Psoas muscle (tissue), 8 donors: ENCODE measurements at regions of chr5 and their contacts with region 1.

Region 1: DNA sequence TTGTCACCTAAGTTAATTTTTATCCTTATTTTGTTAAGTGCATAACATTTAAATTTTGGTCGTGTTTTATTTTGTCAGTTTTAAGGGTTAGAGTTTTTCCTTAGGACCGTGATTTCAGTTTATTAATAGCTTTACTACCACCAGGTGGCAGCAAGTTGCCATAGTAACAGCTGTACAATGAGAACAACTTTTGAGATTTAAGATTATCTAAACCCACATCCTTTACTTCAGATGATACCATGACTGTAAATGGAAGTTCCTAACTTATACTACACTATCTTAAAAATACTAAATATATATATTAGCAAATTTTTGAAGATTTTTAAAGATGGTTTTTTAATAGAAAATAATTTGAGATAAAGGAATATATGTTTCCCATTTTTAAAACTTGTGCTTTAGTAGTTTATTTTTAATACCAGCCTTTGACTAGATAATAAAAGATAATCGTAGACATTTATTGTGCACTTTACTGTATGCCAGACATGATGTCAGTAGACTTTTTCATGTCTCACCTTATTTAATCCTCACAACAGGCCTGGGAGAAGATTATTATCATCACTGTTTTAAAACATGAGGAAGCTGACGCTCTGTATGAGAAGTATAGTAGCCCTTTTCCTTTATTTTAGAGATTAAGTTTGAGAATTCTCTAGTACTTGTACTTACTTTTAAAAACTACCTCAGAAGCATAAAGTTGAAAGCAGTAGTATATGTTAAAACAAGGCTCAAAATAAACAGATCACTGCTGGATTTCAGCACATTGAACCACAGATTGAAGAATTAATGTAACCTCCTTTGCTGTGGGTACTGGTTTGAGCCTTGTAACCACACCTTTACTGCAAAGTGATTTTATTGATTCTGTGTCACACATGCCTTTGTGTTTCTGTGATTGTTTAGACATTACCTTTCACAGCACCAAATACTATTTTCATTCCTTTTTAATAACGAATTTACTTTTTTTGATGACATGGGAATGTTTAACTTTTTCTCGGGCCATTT is 27.5 kb downstream of the SREK1 start:
- DNase-seq: no peak
- ATAC-seq: peak in 2 of 4 donors; percentile 27 to 72
- H3K4me3 ChIP-seq: no peak overlapping the region
- H3K27ac ChIP-seq: no peak overlapping the region
- H3K4me1 ChIP-seq: no peaks in the 10 kb centered on the region
- H3K27me3 ChIP-seq: no peaks in the 10 kb centered on the region
- CTCF ChIP-seq: peak; percentile 49

Region 2: GRCh38 chr5:65588694-65589093 is 583.0 kb before region 1 on chr5:
- intact Hi-C with region 1: loop called in 1 of 2 experiments (anchors 10 kb)
- DNase-seq: no peak
- ATAC-seq: no peak
- H3K4me3 ChIP-seq: no peak overlapping the region
- H3K27ac ChIP-seq: no peak overlapping the region
- H3K4me1 ChIP-seq: no peaks in the 10 kb centered on the region
- H3K27me3 ChIP-seq: no peaks in the 10 kb centered on the region
- CTCF ChIP-seq: no peak

Region 3: GRCh38 chr5:66089384-66089783 is 82.3 kb before region 1 on chr5:
- intact Hi-C with region 1: loop called in 1 of 2 experiments (anchors 1 kb)
- DNase-seq: no peak
- ATAC-seq: no peak
- H3K4me3 ChIP-seq: no peak overlapping the region
- H3K27ac ChIP-seq: no peak overlapping the region
- H3K4me1 ChIP-seq: no peaks in the 10 kb centered on the region
- H3K27me3 ChIP-seq: no peaks in the 10 kb centered on the region
- CTCF ChIP-seq: no peak